Activated CD8-positive, alpha-beta T cell treated with anti-CD3 and anti-CD28 coated beads, Interleukin-2, amount 10 ng/mL, durations not matched to agents 7 days and 5 days (primary cell): ENCODE measurements at regions of chr11 and their contacts with region 1.

Region 1: DNA sequence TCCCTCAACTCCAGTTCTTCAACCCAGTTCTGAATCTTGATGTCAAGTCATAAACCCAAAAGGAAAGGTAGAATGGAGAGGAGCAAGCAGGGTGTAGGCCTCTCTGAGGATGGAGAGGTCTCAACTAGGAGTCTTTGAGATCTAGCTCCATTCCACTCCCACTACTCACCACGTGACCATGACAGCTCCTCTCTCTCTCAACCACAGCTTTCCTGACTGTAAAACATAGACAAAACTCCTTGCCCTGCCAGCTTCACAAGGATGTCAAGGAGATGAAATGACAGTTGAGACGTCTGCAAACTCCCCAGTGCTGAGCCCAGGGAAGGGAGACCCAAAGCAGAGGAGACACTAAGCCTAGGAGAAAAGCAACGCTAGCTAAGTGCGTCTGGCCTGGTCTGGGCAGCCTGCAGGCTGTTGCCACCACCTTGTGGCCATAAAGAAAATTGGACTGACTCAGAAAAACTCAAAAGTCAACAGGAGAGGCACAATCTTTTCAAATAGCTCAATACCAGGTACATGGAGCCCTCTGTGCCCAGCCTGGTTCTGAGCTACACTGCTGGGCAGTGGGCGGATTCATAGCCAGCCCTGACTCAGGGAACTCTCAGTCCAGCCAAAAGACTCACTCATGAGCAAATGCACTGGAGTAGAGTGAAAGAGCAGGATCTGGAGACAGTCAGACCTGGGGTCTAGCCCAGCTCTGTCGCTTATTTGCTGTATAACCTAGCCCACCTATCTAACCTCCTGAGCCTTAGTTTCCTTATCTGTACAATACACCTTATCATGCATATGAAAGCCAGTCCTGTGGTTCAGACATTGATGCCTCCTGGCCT is 3.4 kb downstream of the CLPB start:
- DNase-seq: peak; percentile 60
- ATAC-seq: peak; percentile 28
- H3K4me3 Mint-ChIP-seq: no peak overlapping the region
- H3K27ac Mint-ChIP-seq: peak overlapping the region; percentile 53
- H3K4me1 Mint-ChIP-seq: peaks cover 51% of the 10 kb centered on the region
- H3K27me3 Mint-ChIP-seq: no peaks in the 10 kb centered on the region

Region 2: GRCh38 chr11:71928737-71929452 is 502.1 kb before region 1 on chr11 and contains the start of gene RNF121:
- CTCF ChIA-PET with region 1: interaction called, 16 read pairs
- POLR2A ChIA-PET with region 1: no interaction called
- DNase-seq: peak; percentile 99
- ATAC-seq: peak; percentile 92
- H3K4me3 Mint-ChIP-seq: peak within 1 kb of the TSS; percentile 91
- H3K27ac Mint-ChIP-seq: peak within 1 kb of the TSS; percentile 99
- H3K4me1 Mint-ChIP-seq: peaks cover 38% of the 10 kb centered on the region
- H3K27me3 Mint-ChIP-seq: no peaks in the 10 kb centered on the region
- total RNA-seq, gene RNF121: 24.8 to 29.9 TPM

Region 3: GRCh38 chr11:72085621-72086351 is 345.2 kb before region 1 on chr11:
- CTCF ChIA-PET with region 1: interaction called, 13 read pairs
- POLR2A ChIA-PET with region 1: no interaction called
- DNase-seq: no peak
- ATAC-seq: no peak
- H3K4me3 Mint-ChIP-seq: no peak overlapping the region
- H3K27ac Mint-ChIP-seq: peak overlapping the region; percentile 1
- H3K4me1 Mint-ChIP-seq: peaks cover 24% of the 10 kb centered on the region
- H3K27me3 Mint-ChIP-seq: no peaks in the 10 kb centered on the region

Region 4: DNA sequence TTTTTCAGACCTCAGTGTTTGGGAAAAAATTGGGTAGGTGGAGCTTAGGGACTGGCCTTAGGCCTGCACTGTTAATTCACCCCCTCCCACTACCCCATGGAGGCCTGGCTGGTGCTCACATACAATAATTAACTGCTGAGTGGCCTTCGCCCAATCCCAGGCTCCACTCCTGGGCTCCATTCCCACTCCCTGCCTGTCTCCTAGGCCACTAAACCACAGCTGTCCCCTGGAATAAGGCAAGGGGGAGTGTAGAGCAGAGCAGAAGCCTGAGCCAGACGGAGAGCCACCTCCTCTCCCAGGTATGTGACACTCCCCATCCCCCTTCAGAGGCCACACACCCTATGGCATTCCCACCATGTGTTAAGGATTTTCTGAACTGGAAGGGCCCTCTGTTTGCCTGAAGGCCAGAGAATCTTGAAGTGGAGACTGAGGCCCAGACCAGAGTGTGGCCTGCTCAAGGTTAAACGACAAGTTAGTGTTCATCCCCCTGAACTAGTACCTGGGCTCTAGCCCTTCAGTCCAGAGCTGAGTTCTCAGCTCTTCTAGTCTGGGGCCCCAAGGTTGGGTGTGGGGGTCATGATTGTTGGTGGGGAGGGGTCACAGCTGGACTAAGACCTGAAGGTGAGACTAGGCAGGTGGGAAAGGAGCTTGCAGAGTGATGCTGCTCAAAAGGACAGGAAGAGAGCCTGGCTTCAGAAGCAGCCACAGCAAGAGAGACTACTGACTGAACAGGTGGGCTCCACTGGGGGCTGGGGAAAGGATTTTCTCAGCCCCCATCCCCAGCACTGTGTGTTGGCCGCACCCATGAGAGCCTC is 241.3 kb before region 1 on chr11:
- CTCF ChIA-PET with region 1: interaction called, 46 read pairs
- POLR2A ChIA-PET with region 1: no interaction called
- DNase-seq: no peak
- ATAC-seq: no peak
- H3K4me3 Mint-ChIP-seq: no peak overlapping the region
- H3K27ac Mint-ChIP-seq: no peak overlapping the region
- H3K4me1 Mint-ChIP-seq: no peaks in the 10 kb centered on the region
- H3K27me3 Mint-ChIP-seq: no peaks in the 10 kb centered on the region

Region 5: GRCh38 chr11:72293910-72294615 is 136.9 kb before region 1 on chr11:
- CTCF ChIA-PET with region 1: interaction called, 52 read pairs
- POLR2A ChIA-PET with region 1: no interaction called
- DNase-seq: no peak
- ATAC-seq: no peak
- H3K4me3 Mint-ChIP-seq: no peak overlapping the region
- H3K27ac Mint-ChIP-seq: no peak overlapping the region
- H3K4me1 Mint-ChIP-seq: no peaks in the 10 kb centered on the region
- H3K27me3 Mint-ChIP-seq: no peaks in the 10 kb centered on the region

Region 6: GRCh38 chr11:72333661-72334060 is 97.3 kb before region 1 on chr11:
- CTCF ChIA-PET with region 1: interaction called, 90 read pairs
- POLR2A ChIA-PET with region 1: interaction called, 3 read pairs
- DNase-seq: peak; percentile 91
- ATAC-seq: peak; percentile 97
- H3K4me3 Mint-ChIP-seq: peak overlapping the region; percentile 12
- H3K27ac Mint-ChIP-seq: peak overlapping the region; percentile 82
- H3K4me1 Mint-ChIP-seq: peaks cover 45% of the 10 kb centered on the region
- H3K27me3 Mint-ChIP-seq: no peaks in the 10 kb centered on the region

Region 7: GRCh38 chr11:72413914-72414628 is 16.9 kb before region 1 on chr11:
- CTCF ChIA-PET with region 1: interaction called, 163 read pairs
- POLR2A ChIA-PET with region 1: interaction called, 4 read pairs
- DNase-seq: peak; percentile 85
- ATAC-seq: peak; percentile 86
- H3K4me3 Mint-ChIP-seq: no peak overlapping the region
- H3K27ac Mint-ChIP-seq: no peak overlapping the region
- H3K4me1 Mint-ChIP-seq: peaks cover 32% of the 10 kb centered on the region
- H3K27me3 Mint-ChIP-seq: no peaks in the 10 kb centered on the region